GM18951 (cell line): ENCODE measurements at regions of chr1 and their contacts with region 1.

Region 1: GRCh38 chr1:6259491-6260425 is 1.1 kb downstream of the GPR153 start:
- POLR2A ChIP-seq: no peak

Region 2: GRCh38 chr1:6401673-6402072 is 141.9 kb after region 1 on chr1:
- in situ Hi-C with region 1: loop called (anchors 10 kb)
- POLR2A ChIP-seq: no peak